ENCODE measurements at regions of chr5 and their contacts with region 1.

Region 1: DNA sequence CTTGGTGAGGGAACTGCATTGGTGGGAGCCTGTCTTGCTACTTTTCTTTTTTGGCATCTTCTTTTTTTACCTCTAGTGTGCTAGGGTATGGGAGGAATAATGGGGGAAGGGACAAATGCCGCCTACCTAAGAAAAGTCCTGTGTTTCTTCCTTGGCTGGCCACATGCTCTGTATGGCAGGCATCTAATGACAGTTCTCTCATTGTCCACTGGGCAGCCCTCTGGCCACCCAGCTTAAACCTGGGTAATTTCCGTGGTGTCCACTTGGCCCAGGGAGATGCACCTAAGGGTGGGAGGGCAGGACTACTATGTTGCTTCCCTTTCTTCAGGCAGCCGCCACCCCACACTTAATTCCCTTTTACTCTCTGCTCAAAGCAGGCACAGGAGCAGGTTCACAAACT is 173.1 kb downstream of the YTHDC2 start:
- DNase-seq: no peak
- ATAC-seq: no peak
- H3K4me3 ChIP-seq: no peak overlapping the region
- H3K27ac ChIP-seq: no peak overlapping the region
- H3K4me1 ChIP-seq: no peaks in the 10 kb centered on the region
- H3K27me3 ChIP-seq: peaks cover 6% of the 10 kb centered on the region
- CTCF ChIP-seq: no peak
- POLR2A ChIP-seq: no peak
- RAD21 ChIP-seq: no peak

Region 2: GRCh38 chr5:114296191-114296590 is 609.6 kb after region 1 on chr5:
- CTCF ChIA-PET with region 1: no interaction called
- POLR2A ChIA-PET with region 1: no interaction called
- dilution Hi-C with region 1: no loop called
- in situ Hi-C with region 1: no loop called
- intact Hi-C with region 1: loop called (anchors 5 kb)
- DNase-seq: peak; percentile 88
- ATAC-seq: peak; percentile 82
- H3K4me3 ChIP-seq: no peak overlapping the region
- H3K27ac ChIP-seq: peak overlapping the region; percentile 11; the same call in 1 of the 2 replicates
- H3K4me1 ChIP-seq: peaks cover 2% of the 10 kb centered on the region; the same call in 1 of the 2 replicates
- H3K27me3 ChIP-seq: no peaks in the 10 kb centered on the region
- CTCF ChIP-seq: no peak
- POLR2A ChIP-seq: no peak
- RAD21 ChIP-seq: no peak

Measured in IMR-90 (cell line).